ENCODE measurements at regions of chr12 and their contacts with region 1.

Region 1: GRCh38 chr12:13727707-13728195 is 253.7 kb downstream of the GRIN2B start:
- DNase-seq: peak; percentile 55

Region 2: DNA sequence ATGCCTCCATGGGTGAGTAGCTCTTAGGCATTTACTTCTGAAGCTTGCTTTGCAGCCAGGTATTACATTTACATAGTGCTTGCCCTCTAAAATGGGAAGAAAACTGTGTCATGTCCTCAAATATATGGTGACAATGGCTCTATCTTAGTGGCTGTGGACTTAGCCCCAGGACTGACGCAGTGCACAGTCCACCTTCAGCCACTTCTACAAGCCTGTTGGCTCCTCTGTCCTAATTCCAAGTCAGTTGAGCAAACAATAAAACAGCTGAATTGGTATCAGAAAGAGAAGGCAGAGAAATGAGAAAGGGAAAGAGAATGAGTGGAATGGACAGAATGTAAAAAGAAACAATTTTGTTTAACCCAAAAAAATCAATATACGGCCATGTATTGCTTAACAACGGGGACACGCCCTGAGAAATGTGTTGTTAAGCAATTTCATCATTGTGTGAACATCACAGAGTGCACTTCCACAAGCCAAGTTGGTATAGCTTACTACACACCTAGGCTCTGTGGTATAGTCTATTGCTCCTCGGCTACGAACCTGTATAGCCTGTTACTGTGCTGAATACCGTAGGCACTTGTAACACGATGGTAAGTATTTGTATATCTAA is 160.1 kb after region 1 on chr12:
- in situ Hi-C with region 1: no loop called
- DNase-seq: no peak

Region 3: DNA sequence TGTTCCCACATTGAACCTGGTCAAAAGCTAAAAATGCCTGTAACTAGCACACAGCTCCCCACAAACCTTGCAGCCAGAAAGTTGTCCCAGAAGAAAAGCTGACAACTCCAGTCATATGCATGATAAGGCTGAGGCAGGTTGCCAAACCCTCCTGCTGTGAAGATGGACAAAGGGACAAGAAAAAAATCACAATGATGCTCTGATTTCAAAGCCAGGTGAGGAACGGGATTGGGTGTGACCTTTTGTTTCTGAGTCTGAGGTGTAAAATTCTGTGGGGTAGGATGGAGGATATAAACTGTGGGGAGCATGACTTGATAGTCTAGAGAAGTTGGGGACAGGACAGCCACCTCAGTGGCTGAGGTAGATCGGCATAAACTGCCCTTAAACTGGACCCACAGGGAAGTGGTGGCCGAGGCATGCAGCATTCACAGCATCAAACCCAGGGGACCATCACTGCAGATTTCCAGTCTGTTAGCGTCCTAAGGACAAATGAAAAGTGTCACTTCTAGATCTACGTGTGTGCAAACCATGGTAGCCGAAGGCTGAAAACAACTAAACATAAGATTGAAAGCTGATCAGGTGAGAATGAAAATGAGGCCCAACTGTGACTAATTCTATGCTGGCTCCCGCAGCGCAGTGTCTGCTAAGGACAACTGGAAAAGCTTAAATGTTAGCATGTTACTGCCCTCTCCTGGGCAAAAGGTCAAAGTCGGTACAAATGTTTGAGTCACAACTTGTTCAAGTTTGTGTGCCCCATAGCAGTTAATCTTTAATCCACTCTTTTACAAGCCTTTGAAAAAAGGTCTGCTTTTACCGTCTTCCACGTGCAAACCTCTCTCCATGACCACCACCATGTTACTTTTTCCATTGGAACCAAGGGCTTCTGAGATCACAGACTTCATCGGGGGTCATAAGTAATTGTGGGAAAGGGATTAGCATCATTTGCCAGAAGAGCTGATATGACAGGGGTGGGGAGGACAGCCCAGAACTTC is 213.8 kb after region 1 on chr12:
- in situ Hi-C with region 1: loop called (anchors 25 kb)
- DNase-seq: peak; percentile 99

Measured in ACHN (cell line).